Gastrocnemius medialis (tissue), 4 donors: ENCODE measurements at regions of chr2 and their contacts with region 1.

Region 1: DNA sequence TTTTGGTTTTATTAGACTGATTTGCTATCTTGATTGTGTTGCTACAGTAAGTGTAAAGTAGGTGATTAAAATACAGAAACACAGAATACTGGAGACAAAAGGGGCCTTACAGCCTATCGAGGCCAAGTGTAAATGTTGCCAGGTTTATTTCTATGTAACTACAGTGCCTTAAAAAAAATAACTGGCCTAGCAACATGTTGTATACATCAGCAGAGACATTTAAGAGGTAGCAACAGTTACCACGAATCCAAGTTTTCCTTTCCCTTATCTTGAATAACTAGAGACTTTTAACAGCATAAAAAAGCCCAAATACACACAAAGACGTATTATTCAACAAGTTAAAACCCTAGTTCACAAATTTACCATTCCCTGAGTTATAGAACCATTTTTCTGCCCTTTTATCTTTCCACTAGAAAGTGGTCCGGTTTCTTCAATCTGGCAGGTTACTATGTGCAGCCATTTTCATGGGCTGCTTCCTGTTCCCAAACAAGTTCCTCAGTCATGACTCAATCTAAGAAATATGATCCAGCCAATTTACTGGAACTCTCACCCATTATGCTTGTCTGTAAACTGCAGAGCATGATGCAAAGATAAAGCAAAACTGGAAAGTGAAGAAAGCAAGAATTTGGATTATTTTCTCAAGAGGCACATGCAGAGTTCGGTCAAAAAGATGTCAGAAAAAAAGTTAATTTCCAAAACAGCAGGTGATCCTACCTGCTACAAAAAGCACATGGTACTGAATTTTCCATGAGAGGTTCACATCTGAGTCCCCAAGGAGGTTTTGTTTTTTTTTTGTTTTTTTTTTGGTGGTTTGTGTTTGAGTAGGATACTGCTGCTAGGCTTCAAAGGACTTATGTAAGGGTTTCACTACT is 22.2 kb downstream of the NFE2L2 start:
- DNase-seq: no peak
- ATAC-seq: peak; percentile 84 to 86
- H3K4me3 ChIP-seq: peak overlapping the region; percentile 38 to 52 (median 44)
- H3K27ac ChIP-seq: peak overlapping the region; percentile 82 to 91 (median 85)
- H3K4me1 ChIP-seq: peaks cover 92 to 96% of the 10 kb centered on the region in 2 donors
- H3K27me3 ChIP-seq: no peaks in the 10 kb centered on the region
- CTCF ChIP-seq: no peak
- POLR2A ChIP-seq: no peak

Region 2: GRCh38 chr2:177212106-177212890 is 30.1 kb before region 1 on chr2 and contains the start of gene HNRNPA3:
- in situ Hi-C with region 1: no loop called
- intact Hi-C with region 1: loop called (anchors 2 kb)
- DNase-seq: peak; percentile 98 to 99
- ATAC-seq: peak; percentile 90 to 92
- H3K4me3 ChIP-seq: peak within 1 kb of the TSS; percentile 75 to 92 (median 82)
- H3K27ac ChIP-seq: peak within 1 kb of the TSS; percentile 95 to 100 (median 98)
- H3K4me1 ChIP-seq: peaks cover 46 to 48% of the 10 kb centered on the region in 2 donors
- H3K27me3 ChIP-seq: no peaks in the 10 kb centered on the region
- CTCF ChIP-seq: peak; percentile 10 to 50 (median 47)
- POLR2A ChIP-seq: peak; percentile 91 to 96
- total RNA-seq, gene HNRNPA3: 16.1 to 32.2 (median 22.4) TPM

Region 3: DNA sequence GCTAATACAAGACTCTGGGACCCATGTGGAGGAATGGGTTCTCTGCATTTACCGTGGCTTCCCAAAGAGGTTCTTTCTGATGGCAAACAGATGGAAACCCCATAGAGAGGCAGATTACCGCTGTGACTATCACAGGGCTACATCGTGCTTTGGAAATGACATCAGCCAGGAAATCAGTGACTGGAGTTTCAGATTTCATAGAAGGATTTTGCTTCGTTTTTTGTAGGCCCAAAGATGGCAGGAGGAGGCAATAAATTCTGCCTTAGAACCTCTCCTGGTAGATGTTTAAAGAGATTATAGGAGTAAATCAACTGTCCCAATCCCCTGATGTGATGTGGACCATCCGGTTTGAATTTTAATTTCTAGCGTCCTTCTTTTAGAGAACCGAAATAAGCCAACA is 364.3 kb after region 1 on chr2:
- in situ Hi-C with region 1: no loop called
- intact Hi-C with region 1: no loop called
- DNase-seq: no peak
- ATAC-seq: no peak
- H3K4me3 ChIP-seq: no peak overlapping the region
- H3K27ac ChIP-seq: no peak overlapping the region
- H3K4me1 ChIP-seq: no peaks in the 10 kb centered on the region
- H3K27me3 ChIP-seq: no peaks in the 10 kb centered on the region
- CTCF ChIP-seq: no peak
- POLR2A ChIP-seq: no peak